ENCODE measurements at regions of chr15 and their contacts with region 1.

Region 1: DNA sequence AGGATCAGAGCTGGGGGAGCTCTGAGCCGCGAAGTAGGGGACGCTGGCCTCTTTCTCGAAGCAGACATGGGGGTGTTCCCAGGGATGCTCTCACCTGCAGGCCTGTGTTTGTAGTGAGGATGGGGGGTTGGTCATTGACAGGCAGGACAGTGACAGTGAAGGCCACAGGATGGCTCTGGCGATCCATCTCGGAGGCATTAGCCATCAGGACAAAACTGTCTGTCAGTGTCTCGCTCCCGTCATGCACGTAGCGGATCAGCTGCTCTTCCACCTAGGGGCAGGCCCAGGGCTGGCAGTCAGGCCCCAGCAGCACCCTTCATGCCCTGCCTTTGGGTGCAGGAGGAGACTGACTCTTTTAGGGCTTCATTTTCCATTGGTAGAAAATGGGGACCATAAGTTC is 28.0 kb downstream of the CSPG4 start:
- DNase-seq: no peak
- ATAC-seq: no peak
- H3K4me3 ChIP-seq: no peak overlapping the region
- H3K4me3 Mint-ChIP-seq: no peak overlapping the region
- H3K27ac ChIP-seq: no peak overlapping the region
- H3K27ac Mint-ChIP-seq: no peak overlapping the region
- H3K4me1 ChIP-seq: peaks cover 0 to 6% of the 10 kb centered on the region in 2 donors
- H3K4me1 Mint-ChIP-seq: peaks cover 8% of the 10 kb centered on the region
- H3K27me3 ChIP-seq: peaks cover 0 to 4% (median 0%) of the 10 kb centered on the region in 4 experiments
- H3K27me3 Mint-ChIP-seq: peaks cover 4% of the 10 kb centered on the region
- CTCF ChIP-seq: no peak

Region 2: GRCh38 chr15:75508840-75509532 is 175.7 kb before region 1 on chr15:
- CTCF ChIA-PET with region 1: interaction called, 14 read pairs
- POLR2A ChIA-PET with region 1: no interaction called
- intact Hi-C with region 1: no loop called
- DNase-seq: peak; percentile 45
- ATAC-seq: no peak
- H3K4me3 ChIP-seq: no peak overlapping the region
- H3K4me3 Mint-ChIP-seq: no peak overlapping the region
- H3K27ac ChIP-seq: no peak overlapping the region
- H3K27ac Mint-ChIP-seq: no peak overlapping the region
- H3K4me1 ChIP-seq: no peaks in the 10 kb centered on the region
- H3K4me1 Mint-ChIP-seq: no peaks in the 10 kb centered on the region
- H3K27me3 ChIP-seq: no peaks in the 10 kb centered on the region
- H3K27me3 Mint-ChIP-seq: no peaks in the 10 kb centered on the region
- CTCF ChIP-seq: peak; percentile 51

Region 3: DNA sequence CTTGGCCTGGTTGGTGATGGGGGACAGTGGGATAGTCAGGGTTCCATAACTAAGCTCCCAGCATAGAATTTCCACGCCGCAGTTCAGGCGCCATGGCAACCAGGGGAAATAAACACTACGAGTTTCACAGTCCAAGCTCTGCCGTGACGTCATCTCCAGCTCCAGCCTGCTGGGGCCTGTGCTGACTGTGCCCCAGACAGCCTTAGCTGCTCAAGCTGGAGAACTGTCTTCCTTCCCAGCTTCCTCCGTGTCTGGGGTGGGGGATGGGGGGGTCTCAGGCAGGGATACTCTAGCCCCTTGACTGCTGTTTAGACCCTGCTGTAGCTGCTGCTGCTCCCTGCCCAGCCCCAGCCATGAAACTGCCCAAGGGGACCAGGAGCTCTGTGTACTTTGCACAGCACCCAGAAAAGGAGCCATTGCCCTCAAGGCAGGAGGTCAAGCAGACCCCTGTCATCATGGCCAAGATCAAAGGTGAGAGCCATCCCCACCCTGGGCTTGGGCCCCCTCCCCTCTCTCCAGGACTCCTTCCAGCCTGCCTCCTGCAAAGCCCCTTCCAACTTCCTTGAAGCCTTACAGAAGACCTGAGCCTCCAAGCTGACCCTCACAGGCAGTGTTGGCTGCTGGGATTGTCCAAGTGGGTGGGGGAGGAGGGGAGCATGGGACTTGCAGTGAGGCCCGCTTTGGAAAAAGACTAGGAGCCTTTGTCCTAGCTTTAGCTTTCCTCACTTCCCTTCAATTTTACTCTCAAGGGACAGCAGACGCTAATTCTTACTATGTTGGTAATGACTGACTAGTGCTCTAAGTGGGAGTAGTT is 39.4 kb after region 1 on chr15:
- CTCF ChIA-PET with region 1: interaction called, 7 read pairs
- POLR2A ChIA-PET with region 1: no interaction called
- intact Hi-C with region 1: loop called (anchors 1 kb)
- DNase-seq: peak; percentile 72
- ATAC-seq: peak; percentile 57
- H3K4me3 ChIP-seq: no peak overlapping the region
- H3K4me3 Mint-ChIP-seq: no peak overlapping the region
- H3K27ac ChIP-seq: no peak overlapping the region
- H3K27ac Mint-ChIP-seq: no peak overlapping the region
- H3K4me1 ChIP-seq: peaks cover 0 to 7% of the 10 kb centered on the region in 2 donors
- H3K4me1 Mint-ChIP-seq: peaks cover 11% of the 10 kb centered on the region
- H3K27me3 ChIP-seq: peaks cover 0 to 7% (median 2%) of the 10 kb centered on the region in 4 experiments
- H3K27me3 Mint-ChIP-seq: peaks cover 21% of the 10 kb centered on the region
- CTCF ChIP-seq: no peak

Region 4: DNA sequence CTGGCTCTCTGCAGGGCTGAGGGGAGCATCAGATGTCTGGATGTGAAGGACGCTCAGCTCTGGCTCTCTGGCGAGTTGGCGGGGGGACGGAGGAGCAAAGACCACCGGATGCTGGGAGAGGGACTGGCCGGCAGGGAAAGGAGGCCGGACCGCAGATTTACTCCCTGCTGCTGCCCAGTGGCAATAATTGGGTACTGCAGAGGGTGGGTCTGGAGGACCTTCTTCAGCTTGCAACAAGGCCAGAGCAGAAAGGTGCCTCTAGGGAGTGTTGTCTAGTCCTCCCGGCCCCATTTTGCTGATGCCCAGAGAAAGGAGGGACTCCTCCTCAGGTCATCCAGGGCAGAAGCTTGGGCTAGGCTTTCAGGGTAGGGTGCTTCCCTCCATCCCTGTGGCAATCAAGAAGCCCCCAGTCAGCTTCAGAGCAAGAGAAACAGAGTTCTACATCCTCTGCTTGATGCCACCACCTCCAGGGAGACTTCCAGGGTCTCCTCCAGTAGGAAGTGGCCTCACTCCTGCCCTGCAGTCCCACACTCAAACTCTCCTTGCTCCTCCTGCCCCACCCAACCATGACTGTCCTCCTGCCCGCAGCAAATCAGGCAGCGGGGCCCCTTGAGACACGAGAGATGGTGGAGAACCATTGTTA is 48.3 kb after region 1 on chr15:
- CTCF ChIA-PET with region 1: interaction called, 6 read pairs
- POLR2A ChIA-PET with region 1: no interaction called
- intact Hi-C with region 1: loop called (anchors 2 kb)
- DNase-seq: peak; percentile 71
- ATAC-seq: peak; percentile 82
- H3K4me3 ChIP-seq: no peak overlapping the region
- H3K4me3 Mint-ChIP-seq: peak overlapping the region; percentile 14
- H3K27ac ChIP-seq: no peak overlapping the region
- H3K27ac Mint-ChIP-seq: no peak overlapping the region
- H3K4me1 ChIP-seq: peaks cover 3 to 12% of the 10 kb centered on the region in 2 donors
- H3K4me1 Mint-ChIP-seq: peaks cover 26% of the 10 kb centered on the region
- H3K27me3 ChIP-seq: peaks cover 0 to 10% (median 3%) of the 10 kb centered on the region in 4 experiments
- H3K27me3 Mint-ChIP-seq: peaks cover 12% of the 10 kb centered on the region
- CTCF ChIP-seq: peak; percentile 86

Region 5: GRCh38 chr15:75801859-75802593 is 117.4 kb after region 1 on chr15:
- CTCF ChIA-PET with region 1: interaction called, 33 read pairs
- POLR2A ChIA-PET with region 1: no interaction called
- intact Hi-C with region 1: no loop called
- DNase-seq: peak; percentile 86
- ATAC-seq: peak; percentile 100
- H3K4me3 ChIP-seq: peak overlapping the region in 2 of 5 experiments; percentile 23 to 37
- H3K4me3 Mint-ChIP-seq: peak overlapping the region; percentile 55
- H3K27ac ChIP-seq: no peak overlapping the region
- H3K27ac Mint-ChIP-seq: no peak overlapping the region
- H3K4me1 ChIP-seq: peaks cover 4 to 8% of the 10 kb centered on the region in 2 donors
- H3K4me1 Mint-ChIP-seq: peaks cover 6% of the 10 kb centered on the region
- H3K27me3 ChIP-seq: peaks cover 0 to 18% (median 9%) of the 10 kb centered on the region in 4 experiments
- H3K27me3 Mint-ChIP-seq: peaks cover 55% of the 10 kb centered on the region
- CTCF ChIP-seq: peak; percentile 93

Measured in B cell (primary cell).